ENCODE measurements at regions of chr17 and their contacts with region 1.

Region 1: DNA sequence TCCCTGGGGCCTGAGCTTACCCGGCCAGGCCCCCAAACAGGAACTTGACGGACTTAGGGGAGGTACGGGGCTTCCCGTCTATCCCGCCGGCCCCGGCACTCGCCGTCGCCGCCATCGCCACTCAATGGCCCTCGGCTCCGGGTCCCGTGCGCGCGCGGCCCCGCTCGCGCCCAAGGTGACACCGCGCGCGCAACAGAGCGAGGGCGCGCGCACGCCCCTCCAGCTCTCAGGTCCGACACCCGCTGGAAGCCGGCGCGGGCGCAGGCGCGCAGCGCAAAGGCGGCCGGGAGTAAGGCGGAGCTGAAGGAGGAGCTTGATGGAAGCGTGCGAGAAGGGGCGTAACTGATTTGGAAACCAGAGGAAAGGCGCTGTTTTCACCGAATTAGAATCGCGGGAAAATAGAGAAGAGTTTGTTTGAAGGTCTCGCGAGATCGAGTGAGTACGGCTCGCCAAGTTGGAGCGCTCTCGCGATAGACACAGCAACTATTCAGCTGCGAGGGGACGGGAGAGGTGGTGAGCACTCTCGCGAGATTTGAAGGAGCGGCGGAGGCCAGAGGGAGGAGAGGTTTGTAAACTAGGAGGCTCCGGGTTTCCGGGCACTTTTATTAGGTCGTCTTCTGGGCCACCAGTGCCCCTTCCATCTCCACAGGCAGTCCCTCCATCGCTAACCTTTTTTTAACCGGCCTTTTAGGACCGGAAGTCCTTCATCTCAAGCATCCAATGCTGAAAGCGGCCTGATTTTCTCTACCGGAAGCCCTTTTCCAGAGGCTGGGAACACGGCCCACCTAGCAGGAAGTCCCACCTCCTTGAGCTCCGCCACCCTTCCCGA is at the starts of genes RNF167 and SLC25A11:
- DNase-seq: peak; percentile 99 to 100
- ATAC-seq: peak; percentile 80 to 81
- H3K4me3 ChIP-seq: peak within 1 kb of the TSS; percentile 85
- H3K27ac ChIP-seq: peak within 1 kb of the TSS; percentile 89 to 93
- H3K4me1 ChIP-seq: peaks cover 49% of the 10 kb centered on the region
- CTCF ChIP-seq: no peak
- EP300 ChIP-seq: no peak
- POLR2A ChIP-seq: peak; percentile 91
- RAD21 ChIP-seq: 0 out of 5 replicates have a peak, but pooled peaks of 1 of the 2 experiments have one; percentile 5
- polyA plus RNA-seq, gene RNF167: 98.7 and 110 TPM in 2 replicates
- polyA plus RNA-seq, gene SLC25A11: 60.2 and 64.4 TPM in 2 replicates

Region 2: GRCh38 chr17:4920351-4921048 is 19.5 kb before region 1 on chr17:
- CTCF ChIA-PET with region 1: interaction called, 13 read pairs
- POLR2A ChIA-PET with region 1: interaction called, 14 read pairs
- DNase-seq: no peak
- ATAC-seq: peak; percentile 40 to 54; a peak in 4 of 6 replicates
- H3K4me3 ChIP-seq: no peak overlapping the region
- H3K27ac ChIP-seq: no peak overlapping the region
- H3K4me1 ChIP-seq: 0 out of 3 replicates have a peak, but pooled peaks cover 4% of the 10 kb centered on the region
- CTCF ChIP-seq: no peak
- EP300 ChIP-seq: no peak
- POLR2A ChIP-seq: no peak
- RAD21 ChIP-seq: no peak

Measured in A549 (cell line).